ENCODE measurements at regions of chr7 and their contacts with region 1.

Region 1: DNA sequence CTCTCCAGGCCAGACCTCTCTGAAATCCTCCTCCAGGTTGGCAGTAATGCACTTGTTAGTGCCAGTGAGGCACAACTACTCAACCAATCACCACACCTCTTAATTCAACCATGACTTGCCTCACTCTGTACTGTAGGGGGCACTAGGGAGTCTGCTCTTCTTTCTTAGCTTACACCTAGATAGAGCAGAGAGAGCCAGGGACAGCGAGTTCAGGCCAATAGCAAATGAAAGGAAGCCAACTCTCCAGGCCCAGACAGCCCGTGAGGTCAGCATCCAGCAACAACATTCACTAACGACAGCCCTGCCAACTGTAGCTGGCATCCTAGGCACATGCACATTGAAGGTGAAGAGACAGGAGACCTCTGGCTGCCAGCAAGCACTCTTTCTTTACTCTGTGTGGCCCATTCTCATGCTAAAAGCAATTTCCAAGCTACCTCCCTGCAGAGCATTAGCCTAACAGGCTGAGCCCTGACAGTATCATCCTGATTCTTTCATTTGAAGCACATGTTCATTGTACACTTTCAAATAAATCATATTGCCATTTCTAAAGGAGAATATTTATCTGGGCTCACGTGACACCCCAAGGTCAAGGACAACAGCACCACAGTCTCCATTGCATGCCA is 136.3 kb downstream of the DPY19L1 start:
- DNase-seq: peak in 1 of 10 donors; percentile 59
- H3K4me3 ChIP-seq: no peak overlapping the region
- H3K27ac ChIP-seq: no peak overlapping the region
- H3K27me3 ChIP-seq: no peaks in the 10 kb centered on the region
- CTCF ChIP-seq: no peak

Region 2: GRCh38 chr7:34759452-34760125 is 141.4 kb before region 1 on chr7:
- intact Hi-C with region 1: no loop called
- DNase-seq: no peak
- H3K4me3 ChIP-seq: no peak overlapping the region
- H3K27ac ChIP-seq: no peak overlapping the region
- H3K27me3 ChIP-seq: no peaks in the 10 kb centered on the region
- CTCF ChIP-seq: peak; percentile 26 to 77 (median 66)

Region 3: GRCh38 chr7:34946486-34946885 is 45.5 kb after region 1 on chr7:
- intact Hi-C with region 1: loop called in 1 of 2 experiments (anchors 2 kb)
- DNase-seq: no peak
- H3K4me3 ChIP-seq: no peak overlapping the region
- H3K27ac ChIP-seq: no peak overlapping the region
- H3K27me3 ChIP-seq: no peaks in the 10 kb centered on the region
- CTCF ChIP-seq: no peak

Region 4: GRCh38 chr7:34995757-34996156 is 94.8 kb after region 1 on chr7:
- intact Hi-C with region 1: no loop called
- DNase-seq: no peak
- H3K4me3 ChIP-seq: no peak overlapping the region
- H3K27ac ChIP-seq: no peak overlapping the region
- H3K27me3 ChIP-seq: no peaks in the 10 kb centered on the region
- CTCF ChIP-seq: no peak

Region 5: GRCh38 chr7:35801392-35802101 is 900.5 kb after region 1 on chr7:
- intact Hi-C with region 1: no loop called
- DNase-seq: peak; percentile 61 to 84 (median 72)
- H3K4me3 ChIP-seq: peak overlapping the region; percentile 70 to 97 (median 90)
- H3K27ac ChIP-seq: peak overlapping the region; percentile 90 to 100 (median 99)
- H3K27me3 ChIP-seq: no peaks in the 10 kb centered on the region
- CTCF ChIP-seq: peak; percentile 41 to 85 (median 72)